GM12878 (cell line): ENCODE measurements at regions of chr17 and their contacts with region 1.

Region 1: DNA sequence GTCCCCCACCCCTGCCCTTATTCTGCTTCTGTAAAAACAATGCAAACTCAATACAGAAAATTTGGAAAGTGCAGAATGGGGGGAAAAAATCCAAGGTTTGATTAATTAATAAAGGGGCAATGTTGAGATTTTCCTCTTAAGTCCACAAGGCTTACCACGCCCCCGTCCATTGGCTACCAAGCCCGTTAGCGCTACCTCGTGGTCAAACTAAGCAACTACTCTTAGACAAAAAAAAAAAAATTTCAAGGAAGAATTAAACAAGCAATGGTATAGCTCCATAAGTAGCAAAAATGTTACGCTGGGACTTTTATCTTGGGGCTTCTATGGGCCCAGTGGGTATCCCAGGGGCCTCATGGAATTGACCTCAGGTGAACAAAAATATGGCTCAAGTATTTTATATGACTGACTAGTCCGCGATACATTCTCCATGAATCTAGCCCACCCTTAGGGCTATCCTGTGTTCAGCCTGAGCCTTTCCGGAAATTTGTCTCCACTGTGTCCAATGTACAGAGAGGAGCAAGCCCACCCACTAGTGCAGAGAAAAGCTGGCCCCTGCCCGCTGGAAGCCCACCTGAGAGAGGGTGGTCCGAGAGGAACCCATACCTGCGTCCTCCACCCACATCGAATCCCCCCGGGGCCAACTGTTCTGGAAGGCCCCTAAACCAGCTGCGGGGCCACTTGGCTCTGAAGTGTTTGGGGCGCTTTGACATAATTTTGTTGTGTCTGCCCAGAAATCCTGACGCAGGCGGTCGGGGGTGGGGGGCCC is 19.1 kb upstream of the TEX2 start:
- DNase-seq: peak; percentile 17
- ATAC-seq: peak; percentile 63
- H3K4me3 ChIP-seq: no peak overlapping the region
- H3K27ac ChIP-seq: no peak overlapping the region
- H3K4me1 ChIP-seq: peaks cover 12% of the 10 kb centered on the region
- H3K27me3 ChIP-seq: no peaks in the 10 kb centered on the region; a peak in 1 of 4 replicates
- CTCF ChIP-seq: peak; percentile 70 to 74 (median 74)
- EP300 ChIP-seq: no peak
- POLR2A ChIP-seq: no peak
- RAD21 ChIP-seq: peak; percentile 97

Region 2: DNA sequence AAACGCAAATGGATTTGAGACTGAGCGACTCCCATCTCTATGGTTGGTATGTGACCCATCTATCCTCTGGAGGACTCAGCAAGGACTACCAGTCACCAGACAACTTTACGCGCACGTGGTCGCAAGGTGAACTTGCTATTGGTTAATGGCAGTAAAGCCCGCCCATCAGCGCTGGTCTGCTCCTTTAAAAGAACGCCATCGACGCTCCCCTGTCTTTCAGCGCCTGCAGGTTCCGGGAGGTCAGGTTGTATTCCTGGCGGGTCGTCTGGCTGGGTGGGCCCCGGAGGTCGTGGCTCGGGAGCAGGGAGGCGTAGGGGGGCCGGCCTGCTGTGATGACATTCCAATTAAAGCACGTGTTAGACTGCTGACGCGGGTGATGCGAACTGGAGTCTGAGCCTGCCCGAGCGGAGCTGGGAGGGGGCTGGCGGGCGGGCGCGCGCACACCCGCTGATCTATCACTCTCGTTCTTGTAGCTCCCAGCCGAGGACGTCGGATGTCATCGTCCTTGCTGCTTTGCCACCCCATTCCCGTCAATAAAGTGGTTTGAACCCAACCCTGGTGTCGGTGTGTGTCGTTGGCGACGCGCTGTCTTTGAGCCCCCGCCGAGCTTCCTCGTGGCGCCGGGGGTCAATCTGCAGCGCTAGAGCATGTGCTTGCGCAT is 136.3 kb before region 1 on chr17:
- CTCF ChIA-PET with region 1: interaction called, 30 read pairs
- POLR2A ChIA-PET with region 1: interaction called, 3 read pairs
- RAD21 ChIA-PET with region 1: interaction called, 20 read pairs
- SMC1A ChIA-PET with region 1: interaction called, 20 read pairs
- in situ Hi-C with region 1: no loop called
- intact Hi-C with region 1: loop called (anchors 5 kb)
- DNase-seq: peak; percentile 97
- ATAC-seq: peak; percentile 95
- H3K4me3 ChIP-seq: peak overlapping the region; percentile 79
- H3K27ac ChIP-seq: peak overlapping the region; percentile 94
- H3K4me1 ChIP-seq: peaks cover 3% of the 10 kb centered on the region; the same call in 1 of the 2 replicates
- H3K27me3 ChIP-seq: no peaks in the 10 kb centered on the region
- CTCF ChIP-seq: no peak
- EP300 ChIP-seq: no peak
- POLR2A ChIP-seq: peak; percentile 98
- RAD21 ChIP-seq: no peak

Region 3: GRCh38 chr17:64270885-64271284 is 11.3 kb before region 1 on chr17:
- CTCF ChIA-PET with region 1: interaction called, 14 read pairs
- POLR2A ChIA-PET with region 1: no interaction called
- RAD21 ChIA-PET with region 1: no interaction called
- SMC1A ChIA-PET with region 1: interaction called, 5 read pairs
- in situ Hi-C with region 1: no loop called
- intact Hi-C with region 1: no loop called
- DNase-seq: peak; percentile 34
- ATAC-seq: peak; percentile 75
- H3K4me3 ChIP-seq: 0 out of 2 replicates have a peak overlapping the region, but pooled peaks have one; percentile 14
- H3K27ac ChIP-seq: peak overlapping the region; percentile 47
- H3K4me1 ChIP-seq: peaks cover 17% of the 10 kb centered on the region
- H3K27me3 ChIP-seq: no peaks in the 10 kb centered on the region
- CTCF ChIP-seq: no peak
- EP300 ChIP-seq: no peak
- POLR2A ChIP-seq: no peak
- RAD21 ChIP-seq: 0 out of 2 replicates have a peak, but pooled peaks have one; percentile 3